Endothelial cell of umbilical vein (primary cell): ENCODE measurements at regions of chr1 and their contacts with region 1.

Region 1: GRCh38 chr1:167715157-167715999 is 6.4 kb upstream of the MPZL1 start:
- DNase-seq: peak; percentile 93
- H3K4me3 ChIP-seq: peak overlapping the region; percentile 89 to 99 (median 96)
- H3K27ac ChIP-seq: peak overlapping the region; percentile 61
- H3K4me1 ChIP-seq: peaks cover 10% of the 10 kb centered on the region
- H3K27me3 ChIP-seq: peaks cover 3 to 4% of the 10 kb centered on the region in 2 experiments
- CTCF ChIP-seq: peak; percentile 80 to 86
- POLR2A ChIP-seq: no peak

Region 2: DNA sequence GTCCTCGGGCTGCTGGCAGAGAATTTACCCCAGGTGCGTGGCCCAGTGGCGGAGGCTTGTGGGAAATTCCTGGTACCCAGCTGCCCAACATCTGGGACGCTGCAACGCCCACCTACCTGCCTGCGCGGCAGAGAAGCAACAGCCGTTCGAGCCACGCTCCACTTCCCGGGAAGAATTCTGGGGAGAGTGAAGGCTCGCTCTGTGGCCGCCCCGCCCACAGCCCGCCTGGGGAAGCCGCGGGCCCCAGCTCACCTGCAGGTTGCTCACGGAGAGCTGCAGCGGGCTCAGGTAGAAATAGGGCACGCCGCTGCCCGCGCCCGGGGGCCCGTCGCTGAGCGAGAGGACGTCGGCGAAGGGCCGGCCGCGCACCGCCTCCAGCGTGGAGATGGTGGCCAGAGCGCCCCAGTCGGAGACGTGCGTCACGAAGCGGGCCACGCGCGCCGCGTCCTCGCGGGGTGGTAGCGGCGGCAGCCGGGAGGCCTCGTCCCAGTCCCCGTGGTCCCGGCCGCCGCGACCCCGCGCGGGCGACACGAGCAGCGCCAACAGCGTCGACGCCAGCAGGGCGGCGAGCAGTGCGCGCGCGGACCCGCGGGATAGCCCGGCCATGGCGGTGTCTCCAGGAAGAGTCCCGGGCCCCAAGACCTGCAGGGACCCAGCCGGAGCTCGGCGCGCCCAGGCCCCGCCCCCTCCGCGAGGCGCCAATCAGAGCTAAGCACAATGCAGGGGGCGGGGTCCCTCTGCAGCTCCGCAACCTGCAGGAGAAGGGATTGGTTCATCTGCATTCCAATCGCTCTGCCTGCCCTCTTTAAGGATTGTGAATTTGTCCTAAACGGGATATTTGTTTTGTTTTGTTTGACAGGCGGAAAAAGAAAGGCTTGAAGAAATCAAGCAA is 162.0 kb before region 1 on chr1 and contains the start of gene CREG1:
- CTCF ChIA-PET with region 1: interaction called, 3 read pairs
- POLR2A ChIA-PET with region 1: no interaction called
- dilution Hi-C with region 1: no loop called
- intact Hi-C with region 1: loop called (anchors 1 kb)
- DNase-seq: peak; percentile 91
- H3K4me3 ChIP-seq: peak within 1 kb of the TSS; percentile 42 to 60 (median 49)
- H3K27ac ChIP-seq: no peak within 1 kb of the TSS
- H3K4me1 ChIP-seq: peaks cover 5% of the 10 kb centered on the region
- H3K27me3 ChIP-seq: peaks cover 0 to 2% of the 10 kb centered on the region in 2 experiments
- CTCF ChIP-seq: no peak
- POLR2A ChIP-seq: peak; percentile 49
- total RNA-seq, gene CREG1: 12.1 and 15.8 TPM in 2 replicates

Region 3: DNA sequence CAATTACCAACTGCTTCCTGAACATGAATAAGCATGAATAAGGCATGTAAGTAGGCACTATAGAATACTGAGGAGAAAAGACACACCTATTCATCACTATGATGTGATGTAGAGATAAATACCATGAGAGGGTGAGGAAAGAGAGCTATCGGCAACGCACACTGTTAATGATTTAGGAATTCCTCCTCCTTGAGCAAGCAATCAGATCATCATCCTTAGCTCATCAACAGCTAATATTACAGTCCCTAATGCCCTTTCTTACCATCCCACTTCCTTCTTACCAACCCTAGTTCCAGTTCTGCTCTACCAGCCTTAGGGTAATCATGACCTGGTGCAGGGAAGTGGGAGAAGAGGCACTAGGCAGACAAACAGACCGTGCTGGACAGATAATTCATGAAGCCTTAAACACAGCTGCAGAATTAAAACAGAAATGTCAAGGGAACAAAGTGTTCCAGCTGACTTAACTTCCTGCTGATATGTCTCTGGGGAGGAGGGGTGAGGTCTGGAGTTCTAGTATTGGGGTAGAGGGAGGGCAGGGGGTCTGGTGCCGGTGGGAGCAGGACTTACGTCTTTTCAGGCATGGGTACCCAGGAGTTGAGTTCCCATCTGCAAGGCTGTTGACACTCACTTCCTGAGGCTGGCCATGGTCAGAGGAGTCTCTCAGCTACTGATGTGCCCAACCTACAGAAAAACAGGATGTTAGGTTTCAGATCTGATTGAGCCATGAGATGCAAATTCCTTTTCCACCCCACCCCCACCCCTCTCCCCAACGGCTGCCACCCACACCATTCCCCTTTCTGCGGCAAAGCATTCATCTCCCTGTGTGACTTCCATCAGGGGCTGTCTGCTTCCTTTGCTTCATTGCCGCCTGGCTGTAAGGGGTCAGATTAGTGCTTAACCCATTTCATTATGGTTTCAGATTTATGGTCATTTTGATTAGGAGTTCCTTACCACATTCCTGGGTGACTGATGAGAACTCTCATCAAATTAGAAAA is 97.9 kb before region 1 on chr1:
- CTCF ChIA-PET with region 1: no interaction called
- POLR2A ChIA-PET with region 1: no interaction called
- dilution Hi-C with region 1: no loop called
- intact Hi-C with region 1: no loop called
- DNase-seq: peak; percentile 34
- H3K4me3 ChIP-seq: no peak overlapping the region
- H3K27ac ChIP-seq: no peak overlapping the region
- H3K4me1 ChIP-seq: no peaks in the 10 kb centered on the region
- H3K27me3 ChIP-seq: no peaks in the 10 kb centered on the region
- CTCF ChIP-seq: no peak
- POLR2A ChIP-seq: no peak

Region 4: DNA sequence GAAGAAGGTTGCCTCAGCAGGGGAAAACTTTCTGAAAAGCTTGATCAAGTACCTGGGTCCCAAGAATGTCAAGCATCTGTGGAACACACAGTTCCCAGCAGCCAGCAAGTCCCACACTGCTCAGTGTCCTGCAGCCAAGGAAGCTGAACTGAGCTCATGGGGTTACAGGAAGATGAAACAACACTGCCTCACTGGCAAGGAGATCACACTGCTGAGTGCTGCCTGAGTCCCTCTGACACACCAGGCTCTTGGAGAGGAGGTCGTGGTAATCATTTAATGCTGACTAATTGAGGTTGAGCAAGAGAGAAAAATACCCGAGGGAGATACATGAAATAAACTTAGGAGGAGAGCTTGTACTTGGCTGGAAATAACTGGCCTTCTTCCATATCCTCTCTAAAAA is 81.6 kb after region 1 on chr1:
- CTCF ChIA-PET with region 1: interaction called, 10 read pairs
- POLR2A ChIA-PET with region 1: no interaction called
- dilution Hi-C with region 1: no loop called
- intact Hi-C with region 1: no loop called
- DNase-seq: peak; percentile 70
- H3K4me3 ChIP-seq: no peak overlapping the region
- H3K27ac ChIP-seq: no peak overlapping the region
- H3K4me1 ChIP-seq: peaks cover 12% of the 10 kb centered on the region
- H3K27me3 ChIP-seq: no peaks in the 10 kb centered on the region
- CTCF ChIP-seq: no peak
- POLR2A ChIP-seq: no peak

Region 5: GRCh38 chr1:167936068-167936929 is 220.9 kb after region 1 on chr1 and contains the start of gene DCAF6:
- CTCF ChIA-PET with region 1: no interaction called
- POLR2A ChIA-PET with region 1: no interaction called
- dilution Hi-C with region 1: no loop called
- intact Hi-C with region 1: loop called (anchors 1 kb)
- DNase-seq: peak; percentile 99
- H3K4me3 ChIP-seq: peak within 1 kb of the TSS; percentile 87 to 95 (median 93)
- H3K27ac ChIP-seq: peak within 1 kb of the TSS; percentile 93
- H3K4me1 ChIP-seq: peaks cover 18% of the 10 kb centered on the region
- H3K27me3 ChIP-seq: no peaks in the 10 kb centered on the region
- CTCF ChIP-seq: no peak
- POLR2A ChIP-seq: peak; percentile 89
- total RNA-seq, gene DCAF6: 38.7 and 39.4 TPM in 2 replicates

Region 6: DNA sequence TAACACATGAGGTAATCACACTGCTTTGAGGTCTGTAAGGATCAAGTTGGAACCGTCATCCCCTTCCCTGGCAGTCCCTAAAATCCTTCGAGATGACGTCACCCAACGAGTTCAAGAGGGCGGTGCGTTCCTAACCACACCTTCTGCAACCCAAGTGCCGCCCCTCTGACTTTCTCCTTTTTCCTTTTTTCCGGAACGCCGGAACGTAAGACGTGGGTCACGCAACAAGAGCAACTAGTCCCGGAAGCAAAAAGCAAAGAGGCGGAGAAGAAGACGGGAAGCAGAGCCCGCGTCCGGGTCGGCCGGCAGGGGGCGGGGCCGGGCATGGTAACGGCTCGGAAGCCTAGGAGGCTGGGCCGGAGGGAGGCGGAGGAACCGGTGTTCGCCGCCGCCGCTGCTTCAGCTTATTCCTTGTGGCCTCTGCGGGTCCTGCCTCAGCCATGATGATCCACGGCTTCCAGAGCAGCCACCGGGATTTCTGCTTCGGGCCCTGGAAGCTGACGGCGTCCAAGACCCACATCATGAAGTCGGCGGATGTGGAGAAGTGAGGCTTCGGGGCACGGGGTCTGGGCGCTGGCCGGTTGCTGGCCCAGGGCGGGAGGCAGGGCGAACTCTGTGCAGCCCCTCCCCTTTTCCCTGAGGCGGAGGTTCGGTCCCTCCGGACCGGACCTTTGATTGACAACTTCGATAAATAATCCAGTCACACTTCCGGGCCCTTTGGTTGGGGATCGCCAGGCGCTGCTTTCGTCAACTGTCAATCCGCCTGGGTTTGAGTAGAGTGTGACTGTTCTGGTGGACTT is 463.5 kb after region 1 on chr1 and contains the start of gene TIPRL:
- CTCF ChIA-PET with region 1: no interaction called
- POLR2A ChIA-PET with region 1: no interaction called
- dilution Hi-C with region 1: no loop called
- intact Hi-C with region 1: loop called (anchors 1 kb)
- DNase-seq: peak; percentile 99
- H3K4me3 ChIP-seq: peak within 1 kb of the TSS; percentile 88 to 99 (median 99)
- H3K27ac ChIP-seq: peak within 1 kb of the TSS; percentile 69
- H3K4me1 ChIP-seq: peaks cover 12% of the 10 kb centered on the region
- H3K27me3 ChIP-seq: peaks cover 0 to 2% of the 10 kb centered on the region in 2 experiments
- CTCF ChIP-seq: peak; percentile 50 to 62
- POLR2A ChIP-seq: peak; percentile 89
- total RNA-seq, gene TIPRL: 37.6 and 45.8 TPM in 2 replicates

Region 7: DNA sequence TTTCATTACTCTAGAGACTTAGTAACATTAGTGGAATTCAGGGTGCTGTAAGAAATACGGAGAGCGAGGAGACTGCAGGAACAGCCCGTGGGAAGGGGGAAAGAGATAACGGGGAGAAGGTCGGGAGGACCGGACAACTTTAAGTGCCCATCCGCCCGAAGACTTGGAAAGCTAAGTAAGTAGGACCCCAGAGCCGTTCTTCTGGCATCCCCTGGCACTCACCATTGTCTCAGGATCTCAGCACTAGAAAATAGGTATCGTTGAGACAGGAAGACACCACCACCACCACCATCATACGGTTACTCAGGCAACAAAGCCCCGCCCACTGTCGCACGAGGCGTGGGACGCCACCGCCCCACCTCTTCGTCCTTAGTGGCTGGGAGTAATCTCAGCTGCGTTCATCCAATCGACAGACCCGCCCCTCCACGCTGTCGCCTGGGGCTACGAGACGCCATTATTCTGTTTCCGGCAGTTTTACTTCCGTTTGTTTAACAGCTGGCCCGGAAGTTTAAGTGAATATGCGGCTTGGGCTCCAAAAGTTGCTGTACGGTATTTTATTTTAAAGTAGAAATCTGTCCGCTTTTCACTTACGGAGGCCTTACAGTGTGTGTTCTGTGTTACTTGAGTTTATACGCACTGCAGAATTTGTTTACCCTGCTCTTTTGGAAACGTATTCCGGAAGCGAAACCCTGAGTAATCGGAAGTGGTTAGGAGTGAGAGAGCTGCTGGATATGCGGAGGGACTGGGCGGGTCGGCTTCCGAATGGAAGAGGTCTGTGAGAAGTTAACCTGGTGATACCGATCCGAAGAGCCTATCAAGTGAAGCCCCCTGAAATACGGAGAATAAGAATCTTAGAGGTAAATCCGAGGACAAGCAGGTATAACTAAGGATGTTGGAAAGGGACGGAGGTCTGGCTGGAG is 1652.4 kb after region 1 on chr1 and contains the starts of genes BLZF1 and NME7:
- CTCF ChIA-PET with region 1: no interaction called
- POLR2A ChIA-PET with region 1: no interaction called
- dilution Hi-C with region 1: no loop called
- intact Hi-C with region 1: loop called (anchors 10 kb)
- DNase-seq: peak; percentile 98
- H3K4me3 ChIP-seq: peak within 1 kb of the TSS; percentile 97 to 100 (median 98)
- H3K27ac ChIP-seq: peak within 1 kb of the TSS; percentile 96
- H3K4me1 ChIP-seq: peaks cover 19% of the 10 kb centered on the region
- H3K27me3 ChIP-seq: no peaks in the 10 kb centered on the region
- CTCF ChIP-seq: no peak
- POLR2A ChIP-seq: peak; percentile 84
- total RNA-seq, gene BLZF1: 19.7 and 21.2 TPM in 2 replicates
- total RNA-seq, gene NME7: 25.0 and 25.3 TPM in 2 replicates